CD8-positive, alpha-beta T cell (primary cell): ENCODE measurements at regions of chr5 and their contacts with region 1.

Region 1: DNA sequence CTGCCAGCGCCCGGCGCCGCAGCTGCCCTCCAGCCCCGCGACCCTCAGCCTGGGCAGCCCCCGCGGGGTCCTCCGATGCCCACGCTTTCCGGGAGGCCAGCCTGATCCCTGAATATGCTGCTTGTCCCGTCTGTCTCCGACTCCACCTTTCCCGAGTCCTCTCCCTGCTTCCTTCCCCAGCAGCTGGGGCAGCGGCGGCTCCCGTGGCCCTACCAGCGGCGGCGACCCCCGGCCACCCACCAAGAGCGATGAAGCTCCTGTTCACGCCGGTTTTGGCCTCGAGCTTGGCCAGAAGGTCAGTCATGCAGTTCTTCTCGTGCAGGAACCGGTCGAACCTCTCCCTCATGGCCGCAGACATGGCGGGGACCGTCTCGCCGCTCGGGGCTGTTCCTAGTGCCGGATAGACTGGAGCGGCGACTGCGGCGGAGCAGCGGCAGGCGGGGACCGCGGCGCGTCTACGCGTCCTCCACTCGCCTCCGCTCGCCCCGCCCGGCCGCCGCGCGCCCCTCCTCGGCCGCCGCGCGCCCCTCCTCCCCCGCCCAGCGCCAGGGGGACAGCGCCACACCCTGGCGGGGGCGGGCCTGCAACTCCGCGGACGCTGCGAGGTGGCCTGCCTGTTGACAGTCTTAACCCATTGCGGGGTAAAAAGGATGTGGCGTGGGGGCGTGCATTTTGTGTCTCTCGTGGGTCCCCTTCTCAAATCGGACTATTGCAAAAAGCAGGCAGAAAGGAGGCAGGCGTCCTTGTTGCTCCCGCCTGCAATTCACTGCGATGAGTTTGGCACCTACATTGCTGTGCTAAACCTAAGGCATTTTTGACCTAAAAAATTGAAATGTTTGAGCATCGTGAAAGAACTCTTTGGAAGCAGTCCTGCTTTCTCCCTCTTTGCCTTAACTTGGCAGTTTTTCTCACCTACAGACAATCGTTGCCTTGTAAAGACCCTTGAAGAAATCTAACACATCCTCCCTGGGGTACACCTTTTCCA is at the start of gene REEP5:
- DNase-seq: peak; percentile 67 to 93 (median 84)
- ATAC-seq: peak; percentile 72
- H3K4me3 ChIP-seq: peak within 1 kb of the TSS; percentile 88 to 96
- H3K4me3 Mint-ChIP-seq: peak within 1 kb of the TSS; percentile 79
- H3K27ac ChIP-seq: peak within 1 kb of the TSS; percentile 79 to 89
- H3K27ac Mint-ChIP-seq: peak within 1 kb of the TSS; percentile 95
- H3K4me1 ChIP-seq: peaks cover 51% of the 10 kb centered on the region
- H3K4me1 Mint-ChIP-seq: peaks cover 61% of the 10 kb centered on the region
- H3K27me3 ChIP-seq: no peaks in the 10 kb centered on the region
- H3K27me3 Mint-ChIP-seq: no peaks in the 10 kb centered on the region
- CTCF ChIP-seq: peak; percentile 58
- total RNA-seq, gene REEP5: 20.0 to 24.7 TPM

Region 2: GRCh38 chr5:111454198-111454622 is 1467.9 kb before region 1 on chr5:
- CTCF ChIA-PET with region 1: no interaction called
- POLR2A ChIA-PET with region 1: no interaction called
- intact Hi-C with region 1: no loop called
- DNase-seq: no peak
- ATAC-seq: no peak
- H3K4me3 ChIP-seq: no peak overlapping the region
- H3K4me3 Mint-ChIP-seq: no peak overlapping the region
- H3K27ac ChIP-seq: no peak overlapping the region
- H3K27ac Mint-ChIP-seq: peak overlapping the region; percentile 20
- H3K4me1 ChIP-seq: no peaks in the 10 kb centered on the region
- H3K4me1 Mint-ChIP-seq: peaks cover 19% of the 10 kb centered on the region
- H3K27me3 ChIP-seq: no peaks in the 10 kb centered on the region
- H3K27me3 Mint-ChIP-seq: no peaks in the 10 kb centered on the region
- CTCF ChIP-seq: no peak

Region 3: GRCh38 chr5:112160652-112161391 is 761.3 kb before region 1 on chr5:
- CTCF ChIA-PET with region 1: no interaction called
- POLR2A ChIA-PET with region 1: no interaction called
- intact Hi-C with region 1: loop called in 1 of 2 experiments (anchors 2 kb)
- DNase-seq: peak; percentile 85 to 96 (median 92)
- ATAC-seq: peak; percentile 99
- H3K4me3 ChIP-seq: peak overlapping the region; percentile 74 to 82
- H3K4me3 Mint-ChIP-seq: peak overlapping the region; percentile 95
- H3K27ac ChIP-seq: peak overlapping the region; percentile 58 to 70
- H3K27ac Mint-ChIP-seq: peak overlapping the region; percentile 93
- H3K4me1 ChIP-seq: peaks cover 20% of the 10 kb centered on the region
- H3K4me1 Mint-ChIP-seq: peaks cover 40% of the 10 kb centered on the region
- H3K27me3 ChIP-seq: no peaks in the 10 kb centered on the region
- H3K27me3 Mint-ChIP-seq: no peaks in the 10 kb centered on the region
- CTCF ChIP-seq: peak; percentile 85

Region 4: DNA sequence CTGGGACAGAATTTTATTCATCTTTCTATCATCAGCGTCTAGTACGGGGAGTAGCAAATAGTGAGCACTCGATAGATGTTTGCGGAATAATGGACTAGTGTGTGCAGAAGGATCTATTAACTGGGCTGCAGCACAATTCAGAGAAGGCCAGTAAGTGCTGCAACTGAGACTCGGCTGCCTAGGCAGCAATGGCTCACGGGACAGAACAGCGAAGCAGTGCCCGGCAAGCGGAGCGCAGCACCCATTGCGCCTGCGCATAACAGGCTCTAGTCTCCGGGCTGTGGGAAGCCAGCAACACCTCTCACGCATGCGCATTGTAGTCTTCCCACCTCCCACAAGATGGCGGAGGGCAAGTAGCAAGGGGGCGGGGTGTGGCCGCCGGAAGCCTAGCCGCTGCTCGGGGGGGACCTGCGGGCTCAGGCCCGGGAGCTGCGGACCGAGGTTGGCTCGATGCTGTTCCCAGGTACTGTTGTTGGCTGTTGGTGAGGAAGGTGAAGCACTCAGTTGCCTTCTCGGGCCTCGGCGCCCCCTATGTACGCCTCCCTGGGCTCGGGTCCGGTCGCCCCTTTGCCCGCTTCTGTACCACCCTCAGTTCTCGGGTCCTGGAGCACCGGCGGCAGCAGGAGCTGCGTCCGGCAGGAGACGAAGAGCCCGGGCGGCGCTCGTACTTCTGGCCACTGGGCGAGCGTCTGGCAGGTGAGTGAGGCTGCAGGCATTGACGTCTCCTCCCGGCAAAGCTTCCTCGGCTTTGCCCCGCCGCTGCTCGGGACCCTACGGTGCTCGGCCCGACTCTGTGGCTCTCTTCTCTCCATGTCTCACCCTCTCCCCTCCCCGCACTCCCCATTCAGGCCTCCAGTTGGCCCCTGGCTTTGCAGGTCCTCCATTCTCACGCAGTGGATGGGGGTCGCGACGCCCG is 214.7 kb before region 1 on chr5:
- CTCF ChIA-PET with region 1: no interaction called
- POLR2A ChIA-PET with region 1: no interaction called
- intact Hi-C with region 1: loop called (anchors 2 kb)
- DNase-seq: peak; percentile 91 to 99 (median 96)
- ATAC-seq: peak; percentile 92
- H3K4me3 ChIP-seq: peak overlapping the region; percentile 83 to 99
- H3K4me3 Mint-ChIP-seq: peak overlapping the region; percentile 92
- H3K27ac ChIP-seq: peak overlapping the region; percentile 75 to 84
- H3K27ac Mint-ChIP-seq: peak overlapping the region; percentile 92
- H3K4me1 ChIP-seq: peaks cover 43% of the 10 kb centered on the region
- H3K4me1 Mint-ChIP-seq: peaks cover 57% of the 10 kb centered on the region
- H3K27me3 ChIP-seq: no peaks in the 10 kb centered on the region
- H3K27me3 Mint-ChIP-seq: no peaks in the 10 kb centered on the region
- CTCF ChIP-seq: no peak

Region 5: DNA sequence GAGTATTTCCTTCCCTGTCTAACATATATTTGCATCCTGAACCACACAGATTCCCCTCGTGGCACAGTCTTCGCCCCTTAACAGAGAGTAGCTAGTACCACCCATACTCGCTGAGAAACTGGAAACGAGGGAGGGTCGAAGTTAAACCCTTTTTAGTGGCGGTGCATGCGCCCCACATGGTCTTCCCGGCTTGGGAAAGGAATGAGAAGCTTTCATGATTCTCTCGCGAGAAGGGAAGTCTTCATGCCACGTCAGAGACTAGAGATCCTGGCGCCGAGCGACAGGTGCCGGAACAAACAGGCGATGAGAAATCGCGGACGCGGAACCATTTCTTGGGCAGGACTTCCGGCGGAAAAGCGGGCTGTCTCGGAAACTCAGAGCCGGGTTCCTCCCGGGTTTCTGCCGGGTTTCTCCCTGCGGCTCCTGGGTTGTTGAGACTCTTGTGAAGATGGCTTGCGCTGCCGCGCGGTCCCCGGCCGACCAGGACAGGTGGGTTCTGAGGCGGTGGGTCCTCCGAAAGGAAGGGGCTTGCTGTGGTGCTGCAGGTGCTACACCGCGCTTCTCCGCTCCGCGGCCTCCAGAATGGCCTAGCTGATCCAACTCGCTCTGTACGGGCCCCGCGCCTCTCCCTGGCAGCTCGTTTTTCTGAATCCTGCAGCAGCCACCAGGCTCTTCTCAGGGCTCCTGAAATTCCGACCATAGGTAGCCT is 61.0 kb before region 1 on chr5 and contains the start of gene SRP19:
- CTCF ChIA-PET with region 1: interaction called, 3 read pairs
- POLR2A ChIA-PET with region 1: interaction called, 14 read pairs
- intact Hi-C with region 1: loop called (anchors 1 to 2 kb)
- DNase-seq: peak; percentile 82 to 97 (median 91)
- ATAC-seq: peak; percentile 92
- H3K4me3 ChIP-seq: peak within 1 kb of the TSS; percentile 64 to 99
- H3K4me3 Mint-ChIP-seq: peak within 1 kb of the TSS; percentile 97
- H3K27ac ChIP-seq: peak within 1 kb of the TSS; percentile 82 to 93
- H3K27ac Mint-ChIP-seq: peak within 1 kb of the TSS; percentile 99
- H3K4me1 ChIP-seq: peaks cover 35% of the 10 kb centered on the region
- H3K4me1 Mint-ChIP-seq: peaks cover 43% of the 10 kb centered on the region
- H3K27me3 ChIP-seq: no peaks in the 10 kb centered on the region
- H3K27me3 Mint-ChIP-seq: peaks cover 8% of the 10 kb centered on the region
- CTCF ChIP-seq: no peak
- total RNA-seq, gene SRP19: 50.0 to 52.0 TPM

Region 6: DNA sequence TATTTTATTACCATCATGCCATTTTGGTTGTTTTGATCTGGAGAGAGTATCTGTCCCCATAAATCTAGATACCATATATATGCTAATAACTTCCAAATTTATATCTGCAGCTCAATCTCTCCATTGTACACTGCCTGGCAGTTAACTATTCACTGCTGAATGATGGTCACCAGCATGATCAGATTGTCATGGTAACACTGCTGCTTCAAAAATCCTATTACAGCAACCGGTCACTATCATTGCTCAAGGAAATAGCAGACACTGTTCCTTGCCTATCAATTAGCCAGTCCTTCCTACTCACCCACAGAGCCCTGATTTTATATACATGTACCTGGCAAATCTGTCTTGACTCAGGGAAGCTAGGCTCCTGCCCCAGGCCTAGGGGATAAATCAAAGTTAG is 11.6 kb before region 1 on chr5:
- CTCF ChIA-PET with region 1: interaction called, 3 read pairs
- POLR2A ChIA-PET with region 1: interaction called, 10 read pairs
- intact Hi-C with region 1: no loop called
- DNase-seq: no peak
- ATAC-seq: no peak
- H3K4me3 ChIP-seq: no peak overlapping the region
- H3K4me3 Mint-ChIP-seq: no peak overlapping the region
- H3K27ac ChIP-seq: no peak overlapping the region
- H3K27ac Mint-ChIP-seq: no peak overlapping the region
- H3K4me1 ChIP-seq: no peaks in the 10 kb centered on the region
- H3K4me1 Mint-ChIP-seq: peaks cover 54% of the 10 kb centered on the region
- H3K27me3 ChIP-seq: no peaks in the 10 kb centered on the region
- H3K27me3 Mint-ChIP-seq: no peaks in the 10 kb centered on the region
- CTCF ChIP-seq: no peak

Region 7: GRCh38 chr5:112968411-112969106 is 46.4 kb after region 1 on chr5:
- CTCF ChIA-PET with region 1: interaction called, 42 read pairs
- POLR2A ChIA-PET with region 1: interaction called, 6 read pairs
- intact Hi-C with region 1: loop called (anchors 1 to 2 kb)
- DNase-seq: no peak
- ATAC-seq: no peak
- H3K4me3 ChIP-seq: no peak overlapping the region
- H3K4me3 Mint-ChIP-seq: no peak overlapping the region
- H3K27ac ChIP-seq: no peak overlapping the region
- H3K27ac Mint-ChIP-seq: no peak overlapping the region
- H3K4me1 ChIP-seq: peaks cover 5% of the 10 kb centered on the region
- H3K4me1 Mint-ChIP-seq: peaks cover 6% of the 10 kb centered on the region
- H3K27me3 ChIP-seq: no peaks in the 10 kb centered on the region
- H3K27me3 Mint-ChIP-seq: no peaks in the 10 kb centered on the region
- CTCF ChIP-seq: no peak

Region 8: DNA sequence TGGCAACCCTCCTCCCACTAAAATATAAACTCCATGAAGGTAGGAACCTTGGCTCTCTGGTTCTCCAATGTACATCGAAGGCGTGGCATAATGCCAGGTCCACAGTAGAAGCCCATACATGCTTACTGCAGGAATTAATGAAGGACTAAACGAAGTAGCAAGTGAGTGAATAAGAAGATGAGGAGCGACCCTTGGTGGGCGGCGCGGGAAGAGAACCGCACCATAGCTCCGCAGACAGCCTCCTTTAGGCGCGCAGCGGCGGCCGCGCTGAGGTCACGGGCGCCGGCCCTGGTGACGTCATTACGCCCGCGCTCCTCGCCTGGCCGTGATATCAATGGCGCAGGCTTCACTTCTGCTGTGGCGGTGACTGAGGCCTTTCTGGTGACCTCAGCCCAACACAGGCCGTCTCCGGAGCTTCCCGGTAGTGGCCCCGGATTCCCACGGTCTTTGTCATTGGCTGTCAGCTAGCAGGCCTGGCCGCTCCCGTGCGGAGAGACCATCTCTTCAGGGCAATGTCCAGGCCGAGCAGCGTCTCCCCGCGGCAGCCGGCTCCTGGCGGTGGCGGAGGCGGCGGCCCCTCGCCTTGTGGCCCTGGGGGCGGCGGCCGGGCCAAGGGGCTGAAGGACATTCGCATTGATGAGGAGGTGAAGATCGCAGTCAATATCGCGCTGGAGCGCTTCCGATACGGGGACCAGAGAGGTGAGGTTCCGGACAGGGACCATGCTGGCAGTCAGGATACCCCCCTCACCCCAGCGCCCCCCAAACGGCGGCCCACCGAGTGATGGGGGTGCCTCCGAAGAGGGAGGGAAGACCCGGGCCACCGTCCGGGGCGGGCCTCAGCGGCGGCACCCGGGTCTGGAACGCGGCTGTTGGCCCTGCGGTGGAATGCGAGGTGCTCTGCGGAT is 591.5 kb after region 1 on chr5 and contains the start of gene YTHDC2:
- CTCF ChIA-PET with region 1: no interaction called
- POLR2A ChIA-PET with region 1: no interaction called
- intact Hi-C with region 1: loop called in 1 of 2 experiments (anchors 5 kb)
- DNase-seq: peak; percentile 77 to 94 (median 86)
- ATAC-seq: peak; percentile 95
- H3K4me3 ChIP-seq: peak within 1 kb of the TSS; percentile 64 to 78
- H3K4me3 Mint-ChIP-seq: peak within 1 kb of the TSS; percentile 90
- H3K27ac ChIP-seq: peak within 1 kb of the TSS; percentile 86 to 93
- H3K27ac Mint-ChIP-seq: peak within 1 kb of the TSS; percentile 95
- H3K4me1 ChIP-seq: peaks cover 19% of the 10 kb centered on the region
- H3K4me1 Mint-ChIP-seq: peaks cover 38% of the 10 kb centered on the region
- H3K27me3 ChIP-seq: no peaks in the 10 kb centered on the region
- H3K27me3 Mint-ChIP-seq: peaks cover 9% of the 10 kb centered on the region
- CTCF ChIP-seq: no peak
- total RNA-seq, gene YTHDC2: 35.4 to 36.1 TPM